ENCODE measurements at regions of chr2 and their contacts with region 1.

Region 1: GRCh38 chr2:177164584-177165052 is 48.0 kb upstream of the HNRNPA3 start:
- DNase-seq: peak; percentile 85
- ATAC-seq: peak; percentile 83
- H3K4me3 Mint-ChIP-seq: no peak overlapping the region
- H3K27ac Mint-ChIP-seq: no peak overlapping the region
- H3K4me1 Mint-ChIP-seq: peaks cover 19% of the 10 kb centered on the region
- H3K27me3 Mint-ChIP-seq: no peaks in the 10 kb centered on the region
- CTCF ChIP-seq: peak; percentile 92

Region 2: GRCh38 chr2:177195194-177195593 is 30.6 kb after region 1 on chr2:
- CTCF ChIA-PET with region 1: interaction called, 67 read pairs
- POLR2A ChIA-PET with region 1: interaction called, 9 read pairs
- DNase-seq: no peak
- ATAC-seq: peak; percentile 90
- H3K4me3 Mint-ChIP-seq: no peak overlapping the region
- H3K27ac Mint-ChIP-seq: no peak overlapping the region
- H3K4me1 Mint-ChIP-seq: no peaks in the 10 kb centered on the region
- H3K27me3 Mint-ChIP-seq: no peaks in the 10 kb centered on the region; the same call in 1 of the 2 replicates
- CTCF ChIP-seq: no peak

Region 3: DNA sequence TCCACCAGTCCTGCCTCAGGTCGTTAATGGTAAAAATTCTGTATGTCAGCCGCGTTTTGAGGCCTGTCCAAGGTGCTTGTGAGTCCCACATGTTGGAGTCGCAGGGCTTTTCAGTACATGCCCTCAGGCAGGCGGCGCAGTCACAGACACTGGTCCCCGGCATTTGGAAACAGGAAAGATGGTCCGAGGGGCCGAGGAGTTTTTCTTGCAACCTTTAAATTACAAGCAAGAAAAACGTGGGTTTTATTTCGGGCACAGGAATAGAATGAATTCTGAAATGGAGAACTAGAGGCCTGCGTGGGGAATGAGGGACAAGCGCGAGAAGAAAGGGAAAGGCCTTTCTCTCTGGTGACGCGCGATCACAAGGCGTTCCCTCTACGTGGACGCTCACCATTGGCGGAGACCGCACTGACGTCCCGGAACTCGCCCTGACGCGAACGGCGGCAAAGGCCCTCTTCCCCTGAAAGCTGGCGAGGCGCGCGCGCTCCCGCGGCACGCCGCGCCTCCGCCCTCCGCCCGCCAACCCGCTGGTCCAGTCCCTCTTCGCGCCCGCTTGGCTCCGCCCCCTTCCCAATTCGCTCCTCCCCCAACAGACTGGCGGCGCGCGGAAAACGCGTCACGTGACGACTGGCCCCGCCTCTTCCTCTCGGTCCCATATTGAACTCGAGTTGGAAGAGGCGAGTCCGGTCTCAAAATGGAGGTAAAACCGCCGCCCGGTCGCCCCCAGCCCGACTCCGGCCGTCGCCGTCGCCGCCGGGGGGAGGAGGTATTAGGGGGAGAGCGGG is 47.7 kb after region 1 on chr2 and contains the start of gene HNRNPA3:
- CTCF ChIA-PET with region 1: interaction called, 9 read pairs
- POLR2A ChIA-PET with region 1: interaction called, 10 read pairs
- DNase-seq: peak; percentile 99
- ATAC-seq: peak; percentile 91
- H3K4me3 Mint-ChIP-seq: peak within 1 kb of the TSS; percentile 99
- H3K27ac Mint-ChIP-seq: peak within 1 kb of the TSS; percentile 100
- H3K4me1 Mint-ChIP-seq: peaks cover 53% of the 10 kb centered on the region
- H3K27me3 Mint-ChIP-seq: peaks cover 2% of the 10 kb centered on the region; the same call in 1 of the 2 replicates
- CTCF ChIP-seq: no peak
- total RNA-seq, gene HNRNPA3: 367 to 406 TPM (median 379 TPM) in 3 replicates

Region 4: GRCh38 chr2:177239932-177240630 is 75.5 kb after region 1 on chr2:
- CTCF ChIA-PET with region 1: interaction called, 10 read pairs
- POLR2A ChIA-PET with region 1: no interaction called
- DNase-seq: no peak
- ATAC-seq: no peak; the same call in none of the 2 replicates
- H3K4me3 Mint-ChIP-seq: no peak overlapping the region
- H3K27ac Mint-ChIP-seq: no peak overlapping the region
- H3K4me1 Mint-ChIP-seq: peaks cover 50% of the 10 kb centered on the region
- H3K27me3 Mint-ChIP-seq: no peaks in the 10 kb centered on the region
- CTCF ChIP-seq: no peak

Region 5: DNA sequence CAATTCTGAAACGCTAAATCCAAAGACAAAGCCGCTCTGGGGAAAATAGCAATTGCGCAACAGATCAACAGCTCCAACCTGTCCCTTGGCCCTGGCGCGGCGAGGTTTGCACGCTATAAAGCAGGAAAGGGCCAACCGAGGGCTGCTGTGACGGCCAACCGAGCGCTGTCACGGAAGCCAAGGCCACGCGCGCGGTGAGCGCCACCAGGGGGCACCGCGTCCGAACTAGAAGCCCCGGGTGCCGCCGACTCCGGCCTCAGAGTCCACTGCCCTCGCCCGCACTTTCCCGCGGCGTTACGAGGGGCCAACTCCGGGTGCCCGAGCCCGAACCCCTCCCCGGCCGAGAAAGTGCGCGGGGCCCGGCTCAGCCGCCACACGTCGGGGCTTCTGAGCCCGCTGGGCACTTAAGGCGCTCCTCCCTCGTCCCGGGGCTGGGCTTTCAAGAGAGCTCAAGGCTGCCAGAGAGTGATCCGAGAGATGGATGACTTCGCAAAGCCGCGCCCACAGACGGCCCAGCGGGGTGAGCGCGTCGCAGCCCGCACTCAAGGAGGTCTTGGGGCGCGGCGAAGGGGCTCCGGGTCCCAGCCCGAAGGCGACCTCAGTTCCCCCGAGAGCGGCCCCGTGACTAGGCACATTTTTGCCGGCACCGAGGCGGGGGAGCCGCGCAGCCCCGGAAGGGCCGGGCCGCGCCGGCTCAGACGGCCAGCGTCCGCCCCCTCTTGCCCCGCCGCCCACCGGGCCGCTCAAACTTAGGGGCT is 99.0 kb after region 1 on chr2:
- CTCF ChIA-PET with region 1: interaction called, 34 read pairs
- POLR2A ChIA-PET with region 1: interaction called, 14 read pairs
- DNase-seq: peak; percentile 84
- ATAC-seq: peak; percentile 66
- H3K4me3 Mint-ChIP-seq: peak overlapping the region; percentile 84
- H3K27ac Mint-ChIP-seq: peak overlapping the region; percentile 95
- H3K4me1 Mint-ChIP-seq: peaks cover 38% of the 10 kb centered on the region
- H3K27me3 Mint-ChIP-seq: no peaks in the 10 kb centered on the region
- CTCF ChIP-seq: 0 out of 2 replicates have a peak, but pooled peaks have one; percentile 13

Region 6: DNA sequence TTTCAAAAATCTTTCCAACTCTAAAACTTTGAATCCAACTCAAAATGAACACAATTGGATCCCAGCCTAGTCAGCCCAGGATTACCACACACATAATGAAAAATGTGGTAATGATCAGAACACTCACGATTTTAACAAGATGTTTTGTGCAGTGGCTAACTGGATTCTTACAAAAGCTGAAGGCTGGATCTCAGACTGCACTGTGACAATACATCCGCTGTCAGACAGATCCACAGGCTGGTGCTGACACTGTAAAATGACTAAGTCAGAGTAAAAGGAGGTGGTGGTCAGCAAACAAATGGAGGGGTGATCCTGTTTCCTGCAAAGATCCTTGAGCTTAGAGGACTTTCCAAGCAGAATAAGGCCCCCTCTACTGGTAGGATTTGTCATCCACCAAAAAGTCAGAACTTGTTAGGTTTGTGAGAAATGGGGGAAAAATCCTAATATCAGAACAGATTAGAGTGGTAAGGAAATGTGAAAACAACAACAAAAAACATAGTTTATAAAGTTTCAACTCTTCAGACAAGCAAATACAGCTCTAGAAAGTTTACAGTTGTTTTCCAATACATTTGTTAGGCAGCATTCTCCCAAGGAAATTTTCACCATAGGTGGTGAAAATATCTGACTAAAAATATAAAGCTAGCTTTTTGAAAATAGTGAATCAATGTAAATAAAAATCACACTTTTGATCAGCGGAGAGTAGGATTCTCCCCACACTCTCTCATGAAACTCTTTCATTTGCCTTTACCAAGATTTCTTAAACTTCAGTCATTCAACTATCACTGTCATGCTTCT is 439.9 kb after region 1 on chr2:
- CTCF ChIA-PET with region 1: interaction called, 10 read pairs
- POLR2A ChIA-PET with region 1: interaction called, 5 read pairs
- DNase-seq: no peak
- ATAC-seq: peak; percentile 92
- H3K4me3 Mint-ChIP-seq: no peak overlapping the region
- H3K27ac Mint-ChIP-seq: no peak overlapping the region
- H3K4me1 Mint-ChIP-seq: peaks cover 6% of the 10 kb centered on the region
- H3K27me3 Mint-ChIP-seq: no peaks in the 10 kb centered on the region; the same call in 1 of the 2 replicates
- CTCF ChIP-seq: peak; percentile 42; the same call in 1 of the 2 replicates

Measured in WTC11 (cell line).